ENCODE measurements at regions of chr4 and their contacts with region 1.

Region 1: GRCh38 chr4:39044364-39044955 is 12.3 kb upstream of the TMEM156 start:
- DNase-seq: peak; percentile 96
- H3K4me3 Mint-ChIP-seq: peak overlapping the region; percentile 85
- H3K27ac Mint-ChIP-seq: peak overlapping the region; percentile 92
- H3K4me1 Mint-ChIP-seq: peaks cover 63% of the 10 kb centered on the region
- H3K27me3 Mint-ChIP-seq: no peaks in the 10 kb centered on the region

Region 2: DNA sequence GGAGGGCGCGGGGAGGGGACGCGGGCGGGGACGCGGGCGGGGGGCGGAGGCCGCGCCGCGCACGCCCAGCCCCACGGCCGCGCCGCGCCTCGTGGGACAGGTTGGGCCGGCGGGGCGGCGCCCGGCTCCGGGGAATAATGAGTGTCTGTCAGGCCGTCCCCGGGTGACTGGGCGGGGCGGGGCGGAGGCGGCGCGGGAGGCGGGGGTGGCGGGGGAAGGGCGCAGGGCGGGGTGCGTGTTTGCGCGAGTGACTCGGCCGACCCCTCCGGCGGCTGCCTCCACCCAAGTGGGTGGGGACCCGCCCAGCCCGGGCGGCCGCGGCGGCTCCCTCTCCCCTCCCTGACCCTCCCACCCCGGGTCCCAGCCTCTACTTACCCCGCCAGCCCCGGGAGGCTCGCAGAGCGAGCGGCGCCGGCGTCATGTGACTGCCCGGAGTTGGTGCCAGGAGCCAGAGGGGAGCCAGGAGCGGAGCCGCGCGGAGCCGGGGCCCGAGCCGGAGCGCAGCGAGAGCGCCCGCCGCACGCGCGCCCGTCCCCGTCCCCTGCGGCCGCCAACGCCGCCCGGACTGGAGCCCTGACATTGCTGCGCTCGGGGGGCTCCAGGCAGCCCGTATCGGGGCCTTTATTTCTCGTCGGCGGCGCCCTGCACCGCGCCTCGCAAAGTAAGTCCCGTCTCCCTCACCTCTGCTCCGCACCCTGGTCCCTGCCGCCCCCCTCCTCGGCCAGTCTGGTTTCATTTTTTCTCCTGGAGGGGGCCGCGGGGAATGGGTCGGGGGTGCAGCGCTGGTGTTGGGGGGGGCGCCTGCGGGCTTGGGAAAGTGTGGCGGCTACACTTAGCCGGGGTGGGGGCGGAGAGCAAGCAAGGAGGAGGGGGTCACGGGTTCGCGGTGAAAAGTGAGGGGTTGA is 380.4 kb before region 1 on chr4 and contains the start of gene KLF3:
- intact Hi-C with region 1: loop called (anchors 10 kb)
- DNase-seq: peak; percentile 86
- H3K4me3 Mint-ChIP-seq: peak within 1 kb of the TSS; percentile 85
- H3K27ac Mint-ChIP-seq: peak within 1 kb of the TSS; percentile 53
- H3K4me1 Mint-ChIP-seq: peaks cover 55% of the 10 kb centered on the region
- H3K27me3 Mint-ChIP-seq: peaks cover 24% of the 10 kb centered on the region
- total RNA-seq, gene KLF3: 1.8 and 1.9 TPM in 2 replicates

Region 3: DNA sequence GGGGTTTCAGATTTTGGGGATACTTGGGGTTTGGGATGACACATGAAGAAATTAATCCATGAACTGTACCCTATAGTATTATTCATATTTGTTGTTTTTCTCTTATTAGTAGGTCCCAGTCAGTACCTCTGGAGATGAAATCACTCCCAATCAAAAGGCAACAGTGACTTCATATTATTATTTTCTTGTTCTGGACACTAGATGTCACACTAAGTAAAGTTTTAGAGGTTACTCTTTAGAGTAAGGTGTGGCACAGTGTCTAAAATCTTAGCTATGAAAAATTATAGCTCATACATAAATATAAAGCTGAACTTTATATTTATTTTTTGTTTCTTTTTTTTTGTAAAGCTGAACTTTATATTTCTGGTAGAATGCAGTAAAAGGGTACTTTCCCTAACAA is 141.8 kb before region 1 on chr4:
- intact Hi-C with region 1: loop called (anchors 1 kb)
- DNase-seq: no peak
- H3K4me3 Mint-ChIP-seq: no peak overlapping the region
- H3K27ac Mint-ChIP-seq: no peak overlapping the region
- H3K4me1 Mint-ChIP-seq: peaks cover 35% of the 10 kb centered on the region
- H3K27me3 Mint-ChIP-seq: peaks cover 10% of the 10 kb centered on the region

Region 4: DNA sequence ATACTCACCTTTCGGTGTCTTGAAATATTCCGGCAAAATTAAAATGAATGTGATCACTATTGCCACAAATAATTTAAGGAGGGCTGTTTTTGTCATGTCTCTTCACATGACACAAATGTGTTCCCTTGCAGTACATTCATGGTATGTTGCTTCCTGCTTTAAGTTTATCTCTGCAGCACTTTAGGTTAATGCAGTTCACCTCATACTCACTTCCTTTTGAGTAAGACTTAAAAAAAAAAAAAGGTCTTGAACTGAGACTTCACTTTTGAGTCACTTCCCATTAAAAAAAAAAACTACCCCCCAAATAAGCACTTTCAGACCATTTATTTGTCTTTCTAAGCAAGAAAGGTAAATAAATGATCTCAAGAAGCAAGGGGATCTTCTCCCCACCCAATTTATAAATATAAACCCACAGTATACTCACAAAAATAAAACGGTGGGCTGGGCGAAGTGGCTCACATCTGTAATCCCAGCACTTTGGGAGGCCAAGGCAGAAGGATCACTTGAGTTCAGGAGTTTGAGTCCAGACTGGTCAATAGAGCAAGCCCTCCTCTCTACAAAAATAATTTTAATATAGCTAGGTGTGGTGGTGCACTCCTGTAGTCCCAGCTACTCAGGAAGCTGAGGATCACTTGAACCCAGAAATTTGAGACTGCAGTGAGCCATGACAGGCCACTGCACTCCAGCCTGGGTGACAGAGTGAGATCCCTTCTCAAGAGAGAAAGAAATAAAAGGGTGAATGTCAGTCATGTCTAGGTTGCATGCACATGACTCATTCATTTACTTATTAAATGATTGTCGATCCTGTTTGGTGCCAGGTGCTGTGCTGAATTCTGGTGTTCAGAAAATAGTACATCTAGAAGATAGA is 12.0 kb before region 1 on chr4 and contains the start of gene TMEM156:
- intact Hi-C with region 1: loop called (anchors 1 kb)
- DNase-seq: no peak
- H3K4me3 Mint-ChIP-seq: peak within 1 kb of the TSS; percentile 93
- H3K27ac Mint-ChIP-seq: peak within 1 kb of the TSS; percentile 87
- H3K4me1 Mint-ChIP-seq: peaks cover 46% of the 10 kb centered on the region
- H3K27me3 Mint-ChIP-seq: no peaks in the 10 kb centered on the region
- total RNA-seq, gene TMEM156: 27.7 and 29.4 TPM in 2 replicates

Region 5: DNA sequence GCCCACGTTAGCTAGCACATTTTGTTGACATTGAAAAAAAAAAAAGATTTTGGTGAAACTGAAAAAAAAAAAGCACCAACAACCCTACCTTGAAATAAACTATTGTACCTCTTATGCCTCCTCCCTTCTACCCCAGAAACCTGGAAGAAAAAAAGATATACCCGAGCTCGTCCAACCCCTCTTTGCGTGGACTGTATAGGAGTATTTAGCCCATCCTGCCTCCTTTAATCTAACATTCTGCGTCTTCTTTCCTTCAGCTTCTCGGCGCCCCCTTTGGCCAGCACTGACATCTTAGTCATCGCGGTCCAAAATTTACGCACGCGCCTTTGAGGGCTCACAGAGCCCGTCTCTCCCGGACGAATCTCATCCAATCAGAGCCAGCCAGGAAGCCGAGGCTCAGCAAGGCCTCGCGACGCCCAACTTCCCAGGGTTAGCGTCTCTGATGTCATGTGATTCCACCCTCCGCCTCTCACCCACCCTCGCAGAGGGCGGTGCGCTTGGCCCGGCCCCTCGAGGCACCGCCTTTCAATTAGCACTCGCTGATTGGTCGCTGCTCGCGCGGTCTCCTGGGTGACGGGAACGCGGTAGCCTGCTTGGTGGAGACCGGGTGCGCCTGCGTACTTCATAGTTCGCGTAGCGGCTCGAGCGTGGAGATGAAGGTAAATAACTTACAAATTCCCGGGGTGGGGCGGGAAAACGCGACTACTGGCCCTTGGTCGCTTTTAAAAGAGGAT is 137.6 kb after region 1 on chr4 and contains the start of gene WDR19:
- intact Hi-C with region 1: loop called (anchors 1 kb)
- DNase-seq: peak; percentile 98
- H3K4me3 Mint-ChIP-seq: no peak within 1 kb of the TSS
- H3K27ac Mint-ChIP-seq: no peak within 1 kb of the TSS
- H3K4me1 Mint-ChIP-seq: no peaks in the 10 kb centered on the region
- H3K27me3 Mint-ChIP-seq: peaks cover 15% of the 10 kb centered on the region
- total RNA-seq, gene WDR19: 12.6 and 13.7 TPM in 2 replicates

Region 6: DNA sequence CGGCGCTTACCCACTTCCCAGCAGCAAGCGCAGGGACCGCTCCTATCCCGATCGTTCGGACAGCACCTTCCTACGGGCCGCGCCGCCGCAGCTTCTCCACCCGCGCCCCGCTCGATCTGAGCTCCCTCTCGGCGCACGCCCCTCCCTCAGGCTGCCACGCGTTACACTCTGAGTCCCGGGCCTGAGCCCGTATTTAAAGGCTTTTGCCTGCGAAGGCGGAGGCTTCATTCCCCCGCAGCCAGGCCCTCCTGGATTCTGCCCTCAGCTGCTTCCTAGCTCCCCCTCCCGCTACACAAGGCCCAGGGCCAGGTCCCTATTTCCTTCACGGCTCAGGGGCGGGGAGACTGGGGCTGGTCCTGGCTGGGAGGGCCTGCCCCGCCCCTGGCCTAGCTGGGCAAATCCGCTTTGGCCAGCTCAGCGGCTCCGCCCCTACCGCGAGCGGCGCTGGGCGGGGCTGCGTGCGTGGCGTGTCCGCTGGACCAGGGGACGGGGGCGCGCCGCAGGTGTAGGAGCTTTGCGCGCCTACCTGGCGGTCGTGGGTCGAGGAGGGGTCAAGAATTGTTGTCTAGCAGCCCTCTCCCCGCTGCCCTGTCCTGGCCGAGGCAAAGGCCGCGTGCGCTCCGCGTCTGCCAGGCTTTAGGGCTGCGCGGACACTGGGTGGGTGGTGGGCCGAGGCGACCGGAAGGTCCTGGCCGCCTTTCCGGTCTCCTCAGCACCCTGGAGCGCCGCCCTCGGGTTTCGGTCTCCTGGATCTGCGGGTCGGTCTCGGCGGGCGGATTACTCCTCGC is 483.0 kb after region 1 on chr4 and contains the start of gene UGDH:
- intact Hi-C with region 1: loop called (anchors 10 kb)
- DNase-seq: peak; percentile 91
- H3K4me3 Mint-ChIP-seq: peak within 1 kb of the TSS; percentile 99
- H3K27ac Mint-ChIP-seq: peak within 1 kb of the TSS; percentile 92
- H3K4me1 Mint-ChIP-seq: peaks cover 19% of the 10 kb centered on the region
- H3K27me3 Mint-ChIP-seq: no peaks in the 10 kb centered on the region
- total RNA-seq, gene UGDH: 26.0 and 30.6 TPM in 2 replicates